CD4-positive, alpha-beta T cell (primary cell): ENCODE measurements at regions of chr14 and their contacts with region 1.

Region 1: GRCh38 chr14:53152890-53153701 is at the start of gene DDHD1:
- DNase-seq: peak; percentile 69 to 96 (median 82)
- ATAC-seq: peak; percentile 82
- H3K4me3 ChIP-seq: peak within 1 kb of the TSS; percentile 98
- H3K4me3 Mint-ChIP-seq: peak within 1 kb of the TSS; percentile 99
- H3K27ac ChIP-seq: peak within 1 kb of the TSS; percentile 87 to 94
- H3K27ac Mint-ChIP-seq: peak within 1 kb of the TSS; percentile 97
- H3K4me1 ChIP-seq: peaks cover 26% of the 10 kb centered on the region
- H3K4me1 Mint-ChIP-seq: peaks cover 56% of the 10 kb centered on the region
- H3K27me3 ChIP-seq: no peaks in the 10 kb centered on the region
- H3K27me3 Mint-ChIP-seq: no peaks in the 10 kb centered on the region
- CTCF ChIP-seq: no peak
- total RNA-seq, gene DDHD1: 42.5 to 44.5 TPM

Region 2: DNA sequence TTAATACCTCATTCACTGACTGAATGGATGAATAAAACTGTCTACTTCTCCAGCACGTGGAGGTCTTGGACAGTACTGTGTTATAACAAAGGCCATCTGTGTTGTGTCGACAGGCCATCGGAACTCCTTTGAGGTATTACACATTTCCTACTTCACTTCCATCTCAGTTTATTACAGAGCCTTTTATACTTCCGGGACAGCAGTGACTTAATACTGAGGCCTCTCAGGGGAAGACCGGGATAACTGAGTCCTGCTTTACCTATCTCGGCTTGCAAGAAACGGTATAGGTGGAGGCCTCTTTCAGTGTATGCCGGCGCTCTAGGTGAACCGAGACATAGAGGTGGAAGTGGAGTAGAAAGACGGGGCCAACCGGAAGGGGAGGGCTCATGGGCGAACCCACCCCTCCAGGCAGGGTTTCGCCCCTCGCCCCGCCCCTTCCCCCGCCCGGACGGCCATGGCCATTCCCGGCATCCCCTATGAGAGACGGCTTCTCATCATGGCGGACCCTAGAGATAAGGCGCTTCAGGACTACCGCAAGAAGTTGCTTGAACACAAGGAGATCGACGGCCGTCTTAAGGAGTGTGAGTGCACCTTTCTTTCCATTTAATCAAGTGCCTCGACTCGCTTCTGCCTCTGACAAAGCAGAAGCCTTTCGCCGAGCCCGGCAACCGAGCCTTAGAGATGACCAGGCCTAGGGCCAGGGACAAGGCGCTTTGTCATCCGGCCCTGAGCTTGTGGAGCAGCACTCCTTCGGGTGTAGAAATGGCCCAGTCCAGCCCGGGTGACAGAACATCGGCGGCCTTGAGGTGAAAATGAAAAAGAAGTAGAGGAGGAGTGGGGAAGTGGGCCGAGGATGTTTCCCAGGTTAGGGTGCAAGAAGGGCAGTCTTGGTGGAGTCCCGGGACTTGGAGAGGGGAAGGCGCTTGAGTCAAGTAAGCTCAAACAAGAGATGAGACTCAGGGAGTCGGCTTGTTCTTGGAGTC is 446.1 kb before region 1 on chr14 and contains the start of gene PSMC6:
- CTCF ChIA-PET with region 1: no interaction called
- POLR2A ChIA-PET with region 1: no interaction called
- intact Hi-C with region 1: loop called in 1 of 2 experiments (anchors 10 kb)
- DNase-seq: peak; percentile 90 to 97 (median 95)
- ATAC-seq: peak; percentile 98
- H3K4me3 ChIP-seq: peak within 1 kb of the TSS; percentile 72
- H3K4me3 Mint-ChIP-seq: peak within 1 kb of the TSS; percentile 96
- H3K27ac ChIP-seq: peak within 1 kb of the TSS; percentile 71 to 88
- H3K27ac Mint-ChIP-seq: peak within 1 kb of the TSS; percentile 94
- H3K4me1 ChIP-seq: peaks cover 13% of the 10 kb centered on the region
- H3K4me1 Mint-ChIP-seq: peaks cover 48% of the 10 kb centered on the region
- H3K27me3 ChIP-seq: no peaks in the 10 kb centered on the region
- H3K27me3 Mint-ChIP-seq: no peaks in the 10 kb centered on the region
- CTCF ChIP-seq: no peak
- total RNA-seq, gene PSMC6: 110 to 111 TPM

Region 3: GRCh38 chr14:53044486-53044885 is 108.6 kb before region 1 on chr14:
- CTCF ChIA-PET with region 1: no interaction called
- POLR2A ChIA-PET with region 1: no interaction called
- intact Hi-C with region 1: no loop called
- DNase-seq: no peak
- ATAC-seq: no peak
- H3K4me3 ChIP-seq: no peak overlapping the region
- H3K4me3 Mint-ChIP-seq: no peak overlapping the region
- H3K27ac ChIP-seq: no peak overlapping the region
- H3K27ac Mint-ChIP-seq: no peak overlapping the region
- H3K4me1 ChIP-seq: no peaks in the 10 kb centered on the region
- H3K4me1 Mint-ChIP-seq: no peaks in the 10 kb centered on the region
- H3K27me3 ChIP-seq: no peaks in the 10 kb centered on the region
- H3K27me3 Mint-ChIP-seq: no peaks in the 10 kb centered on the region
- CTCF ChIP-seq: no peak

Region 4: DNA sequence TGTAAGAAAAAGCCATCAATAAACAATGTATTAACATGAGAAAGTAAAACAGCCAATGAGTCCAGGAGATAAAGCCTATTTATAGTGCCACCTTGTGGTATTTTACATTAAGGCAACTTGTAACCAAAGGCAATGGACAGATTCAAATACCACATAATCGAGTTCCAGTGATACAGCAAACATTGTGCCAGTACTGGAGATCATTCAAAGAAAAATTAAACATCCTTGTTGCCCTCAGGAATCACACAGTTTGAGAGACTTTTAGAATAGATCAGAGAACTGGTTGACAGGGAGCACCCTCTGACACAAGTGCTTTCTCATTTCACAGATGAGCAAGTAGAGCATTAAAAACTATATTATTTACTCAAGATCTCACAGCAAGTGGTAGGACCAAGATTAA is 98.1 kb before region 1 on chr14:
- CTCF ChIA-PET with region 1: interaction called, 3 read pairs
- POLR2A ChIA-PET with region 1: interaction called, 17 read pairs
- intact Hi-C with region 1: no loop called
- DNase-seq: peak in 3 of 14 experiments; percentile 47 to 62 (median 61)
- ATAC-seq: peak; percentile 51
- H3K4me3 ChIP-seq: no peak overlapping the region
- H3K4me3 Mint-ChIP-seq: no peak overlapping the region
- H3K27ac ChIP-seq: no peak overlapping the region
- H3K27ac Mint-ChIP-seq: no peak overlapping the region
- H3K4me1 ChIP-seq: no peaks in the 10 kb centered on the region
- H3K4me1 Mint-ChIP-seq: peaks cover 4% of the 10 kb centered on the region
- H3K27me3 ChIP-seq: no peaks in the 10 kb centered on the region
- H3K27me3 Mint-ChIP-seq: no peaks in the 10 kb centered on the region
- CTCF ChIP-seq: peak; percentile 90

Region 5: DNA sequence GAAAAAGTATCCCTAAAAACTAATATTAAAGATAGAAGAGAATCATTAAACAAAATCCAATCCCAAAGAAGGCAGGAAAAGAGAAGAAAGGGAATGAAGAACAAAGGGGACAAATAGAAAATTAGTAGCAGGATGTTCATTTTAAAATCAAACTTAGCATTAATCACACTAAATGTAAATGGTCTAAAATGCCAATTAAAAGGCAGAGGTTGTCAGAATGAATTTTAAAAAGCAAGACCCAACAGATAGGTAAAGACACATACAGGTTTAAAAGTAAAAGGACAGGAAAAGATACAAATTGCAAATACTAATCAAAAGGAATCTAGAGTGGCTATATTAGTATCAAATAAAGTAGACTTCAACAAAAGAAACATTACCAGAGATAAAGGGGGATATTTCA is 12.5 kb before region 1 on chr14:
- CTCF ChIA-PET with region 1: no interaction called
- POLR2A ChIA-PET with region 1: interaction called, 36 read pairs
- intact Hi-C with region 1: no loop called
- DNase-seq: no peak
- ATAC-seq: no peak
- H3K4me3 ChIP-seq: no peak overlapping the region
- H3K4me3 Mint-ChIP-seq: no peak overlapping the region
- H3K27ac ChIP-seq: no peak overlapping the region
- H3K27ac Mint-ChIP-seq: no peak overlapping the region
- H3K4me1 ChIP-seq: peaks cover 13% of the 10 kb centered on the region
- H3K4me1 Mint-ChIP-seq: peaks cover 30% of the 10 kb centered on the region
- H3K27me3 ChIP-seq: no peaks in the 10 kb centered on the region
- H3K27me3 Mint-ChIP-seq: no peaks in the 10 kb centered on the region
- CTCF ChIP-seq: no peak

Region 6: DNA sequence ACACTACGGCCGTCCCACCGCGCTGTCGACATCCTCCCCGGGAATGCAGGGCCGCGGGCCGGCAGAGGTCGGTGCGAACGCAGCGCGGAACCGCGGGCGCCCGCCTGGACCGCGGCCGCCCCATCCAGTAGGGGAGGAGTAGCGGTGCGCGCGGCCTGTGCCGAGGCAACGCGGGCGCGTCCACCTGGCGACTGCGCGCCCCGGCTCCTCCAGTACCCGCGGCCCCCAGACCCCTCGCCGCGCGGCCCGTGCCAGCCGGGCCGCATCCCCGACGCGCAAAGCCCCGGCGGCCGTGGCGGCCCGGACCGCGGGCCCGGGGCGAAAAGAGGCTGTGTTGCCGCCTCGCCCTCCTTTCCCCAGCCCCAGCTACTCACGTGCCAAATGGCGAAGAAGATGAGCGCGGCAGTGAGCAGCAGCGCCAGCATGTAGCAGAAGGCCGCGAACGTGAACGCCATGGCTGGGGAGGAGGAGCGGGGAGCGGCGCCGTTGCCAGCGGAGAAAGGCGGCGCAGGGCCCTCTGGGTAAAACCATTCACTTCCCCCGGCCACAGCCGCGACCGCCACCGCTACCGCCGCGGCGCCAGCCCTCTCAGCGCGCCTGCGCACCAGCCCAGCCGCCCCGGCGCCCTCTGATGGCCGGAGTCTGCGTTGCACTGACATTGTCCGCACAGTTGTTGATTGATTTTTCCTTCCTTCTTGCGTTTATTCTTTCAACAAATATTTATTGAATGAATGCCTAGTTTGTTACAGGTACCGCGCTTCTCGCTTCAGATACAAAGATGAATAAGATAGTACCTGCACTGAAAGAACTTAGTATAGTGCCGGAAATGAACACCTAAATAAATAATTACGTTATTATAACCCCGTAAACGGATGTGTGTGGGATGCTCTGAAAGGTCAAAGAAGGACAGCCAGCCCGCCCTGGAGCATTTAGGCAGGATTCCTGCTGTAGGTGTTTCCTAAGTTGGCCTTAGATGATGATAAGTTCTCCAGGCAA is 1288.1 kb after region 1 on chr14 and contains the start of gene CNIH1:
- CTCF ChIA-PET with region 1: no interaction called
- POLR2A ChIA-PET with region 1: no interaction called
- intact Hi-C with region 1: loop called in 1 of 2 experiments (anchors 5 kb)
- DNase-seq: peak; percentile 85 to 97 (median 92)
- ATAC-seq: peak; percentile 93
- H3K4me3 ChIP-seq: peak within 1 kb of the TSS; percentile 66
- H3K4me3 Mint-ChIP-seq: peak within 1 kb of the TSS; percentile 90
- H3K27ac ChIP-seq: peak within 1 kb of the TSS; percentile 41 to 75
- H3K27ac Mint-ChIP-seq: peak within 1 kb of the TSS; percentile 86
- H3K4me1 ChIP-seq: peaks cover 24% of the 10 kb centered on the region
- H3K4me1 Mint-ChIP-seq: peaks cover 44% of the 10 kb centered on the region
- H3K27me3 ChIP-seq: no peaks in the 10 kb centered on the region
- H3K27me3 Mint-ChIP-seq: no peaks in the 10 kb centered on the region
- CTCF ChIP-seq: peak; percentile 98
- total RNA-seq, gene CNIH1: 55.9 TPM